ENCODE measurements at regions of chr5 and their contacts with region 1.

Region 1: DNA sequence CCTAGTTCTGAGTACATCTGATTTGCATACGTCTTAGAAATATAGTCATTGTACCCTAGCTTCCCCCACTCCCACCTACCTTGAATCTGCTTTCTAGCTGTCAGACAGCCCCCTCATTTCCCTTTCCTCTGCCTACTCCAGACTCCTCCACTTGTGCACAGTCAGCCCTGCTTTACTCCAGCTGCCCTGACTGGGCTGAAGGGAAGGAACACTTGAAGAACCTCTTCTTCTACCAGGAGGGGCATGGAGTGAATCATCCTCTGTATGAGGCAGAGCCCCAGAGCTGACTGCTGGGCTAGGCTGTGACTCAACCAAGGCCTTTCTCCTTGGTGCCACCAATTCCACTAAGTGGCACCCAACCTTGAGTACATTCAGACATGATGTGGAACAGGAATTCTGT is 18.1 kb upstream of the ZFR start:
- DNase-seq: no peak
- H3K4me3 ChIP-seq: no peak overlapping the region
- H3K27ac ChIP-seq: no peak overlapping the region
- H3K4me1 ChIP-seq: no peaks in the 10 kb centered on the region
- H3K27me3 ChIP-seq: no peaks in the 10 kb centered on the region
- CTCF ChIP-seq: no peak
- EP300 ChIP-seq: no peak
- POLR2A ChIP-seq: no peak
- RAD21 ChIP-seq: no peak

Region 2: DNA sequence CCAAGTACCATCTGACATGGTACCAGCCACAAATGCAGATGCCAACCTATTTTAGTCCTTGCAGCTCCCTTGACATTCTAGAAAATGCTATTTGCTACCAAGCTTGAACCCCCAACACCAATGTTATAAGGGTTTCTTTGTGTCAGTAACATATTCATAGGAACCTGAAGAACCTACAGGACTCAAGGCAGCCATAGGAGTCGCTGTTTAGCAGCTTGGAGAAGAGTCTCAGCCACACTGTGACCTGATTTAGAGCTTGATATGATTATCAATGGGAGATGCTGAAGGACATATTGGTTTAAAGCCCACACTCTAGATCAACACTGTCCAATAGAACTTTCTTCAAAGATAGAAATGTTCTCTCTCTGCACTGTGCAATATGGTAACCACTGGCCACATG is 11.7 kb before region 1 on chr5:
- CTCF ChIA-PET with region 1: interaction called, 10 read pairs
- POLR2A ChIA-PET with region 1: no interaction called
- DNase-seq: peak in 1 of 2 experiments; percentile 36
- H3K4me3 ChIP-seq: no peak overlapping the region
- H3K27ac ChIP-seq: no peak overlapping the region
- H3K4me1 ChIP-seq: no peaks in the 10 kb centered on the region
- H3K27me3 ChIP-seq: no peaks in the 10 kb centered on the region; a peak in 2 of 7 replicates
- CTCF ChIP-seq: peak in 2 of 3 experiments; percentile 24 to 63; a peak in 2 of 4 replicates
- EP300 ChIP-seq: no peak
- POLR2A ChIP-seq: no peak
- RAD21 ChIP-seq: peak; percentile 49 to 62

Region 3: GRCh38 chr5:32475334-32476097 is 12.9 kb after region 1 on chr5:
- CTCF ChIA-PET with region 1: interaction called, 13 read pairs
- POLR2A ChIA-PET with region 1: no interaction called
- DNase-seq: no peak
- H3K4me3 ChIP-seq: no peak overlapping the region
- H3K27ac ChIP-seq: peak overlapping the region; percentile 12; the same call in 1 of the 2 replicates
- H3K4me1 ChIP-seq: peaks cover 2 to 11% (median 9%) of the 10 kb centered on the region in 4 experiments; a peak in 6 of 7 replicates
- H3K27me3 ChIP-seq: no peaks in the 10 kb centered on the region
- CTCF ChIP-seq: no peak
- EP300 ChIP-seq: no peak
- POLR2A ChIP-seq: no peak
- RAD21 ChIP-seq: no peak